Naive thymus-derived CD4-positive, alpha-beta T cell (primary cell): ENCODE measurements at regions of chr3 and their contacts with region 1.

Region 1: GRCh38 chr3:57078344-57078634 is 17.8 kb downstream of the SPATA12 start:
- DNase-seq: peak in 6 of 9 donors; percentile 12 to 34 (median 21)
- ATAC-seq: peak; percentile 62
- H3K4me3 ChIP-seq: peak overlapping the region; percentile 58
- H3K4me3 Mint-ChIP-seq: peak overlapping the region; percentile 49 to 83 (median 76)
- H3K27ac ChIP-seq: no peak overlapping the region
- H3K27ac Mint-ChIP-seq: no peak overlapping the region
- H3K4me1 ChIP-seq: peaks cover 0 to 4% of the 10 kb centered on the region in 2 donors
- H3K4me1 Mint-ChIP-seq: peaks cover 0 to 10% (median 8%) of the 10 kb centered on the region in 7 donors
- H3K27me3 ChIP-seq: peaks cover 9 to 14% of the 10 kb centered on the region in 2 donors
- H3K27me3 Mint-ChIP-seq: peaks cover 58 to 67% (median 60%) of the 10 kb centered on the region in 5 donors

Region 2: DNA sequence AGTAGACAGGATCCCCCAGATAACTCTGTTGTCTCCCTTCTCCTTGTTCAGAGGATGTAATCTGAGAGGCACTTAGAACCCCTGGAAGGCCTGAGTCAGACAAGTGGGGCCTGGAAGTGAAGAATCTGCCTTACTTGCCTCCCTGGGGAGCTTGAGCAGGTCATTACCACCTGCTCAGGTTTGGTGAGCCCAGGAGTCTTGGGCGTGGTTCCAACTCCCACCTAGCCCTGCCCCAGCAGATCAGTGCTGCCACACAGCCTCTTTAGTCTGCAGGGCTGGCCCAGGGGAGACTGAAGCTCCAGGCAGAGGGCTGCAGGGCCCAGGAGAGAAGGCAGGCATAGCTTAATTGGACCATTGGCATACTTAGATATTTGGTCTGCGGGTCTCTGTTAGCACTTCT is 840.0 kb before region 1 on chr3:
- CTCF ChIA-PET with region 1: no interaction called
- POLR2A ChIA-PET with region 1: no interaction called
- intact Hi-C with region 1: loop called in 1 of 2 experiments (anchors 10 kb)
- DNase-seq: no peak
- ATAC-seq: no peak
- H3K4me3 ChIP-seq: no peak overlapping the region
- H3K4me3 Mint-ChIP-seq: no peak overlapping the region
- H3K27ac ChIP-seq: no peak overlapping the region
- H3K27ac Mint-ChIP-seq: no peak overlapping the region
- H3K4me1 ChIP-seq: no peaks in the 10 kb centered on the region
- H3K4me1 Mint-ChIP-seq: no peaks in the 10 kb centered on the region
- H3K27me3 ChIP-seq: no peaks in the 10 kb centered on the region
- H3K27me3 Mint-ChIP-seq: peaks cover 13 to 23% (median 14%) of the 10 kb centered on the region in 5 donors